ENCODE measurements at regions of chr11 and their contacts with region 1.

Region 1: DNA sequence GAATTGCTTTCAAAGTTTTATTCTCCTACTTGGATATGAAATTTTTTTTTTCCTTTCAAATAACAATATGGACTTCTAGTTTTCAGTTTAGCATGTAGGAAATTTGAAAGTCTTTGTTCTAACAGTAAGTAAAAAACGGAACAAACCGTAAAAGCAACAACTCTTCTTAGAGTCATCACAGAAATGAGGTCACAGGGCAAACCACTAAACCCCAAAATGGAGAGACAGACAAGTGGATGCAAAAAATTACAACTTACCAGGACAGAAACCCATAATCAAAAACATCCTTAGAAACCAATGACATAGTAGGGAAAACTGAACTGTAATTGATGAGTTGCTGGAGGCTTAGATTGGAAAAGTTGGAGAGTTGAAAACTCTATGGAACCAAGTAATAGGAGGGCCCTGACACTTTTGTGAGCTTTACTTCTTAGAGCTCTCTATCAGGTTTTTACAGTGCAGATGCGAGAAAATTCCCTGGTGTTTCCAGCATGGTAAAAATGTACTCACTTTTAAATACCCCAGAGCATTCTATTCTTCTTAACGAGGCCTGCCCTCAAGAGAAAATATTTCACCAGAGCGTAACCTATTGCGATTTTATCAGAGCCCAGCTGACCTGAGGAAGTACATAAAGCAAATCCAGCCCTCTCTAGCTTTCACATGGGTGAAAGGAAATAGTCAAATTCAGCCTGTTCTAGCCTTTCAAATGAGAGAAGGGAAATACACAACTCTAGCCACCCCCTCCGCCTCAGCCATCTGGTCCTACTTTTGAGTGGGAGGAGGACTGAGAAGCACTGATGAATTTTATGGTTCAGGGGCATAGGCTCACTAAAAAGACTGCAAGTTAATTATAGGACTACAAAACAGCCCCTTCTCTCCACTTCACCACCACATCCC is 39.1 kb downstream of the CASP12 start:
- DNase-seq: peak; percentile 66
- ATAC-seq: peak; percentile 88
- H3K4me3 ChIP-seq: peak overlapping the region in 3 of 5 experiments; percentile 15 to 46 (median 38)
- H3K4me3 Mint-ChIP-seq: peak overlapping the region; percentile 79
- H3K27ac ChIP-seq: peak overlapping the region; percentile 72 to 89
- H3K27ac Mint-ChIP-seq: peak overlapping the region; percentile 91
- H3K4me1 ChIP-seq: peaks cover 18 to 27% of the 10 kb centered on the region in 2 donors
- H3K4me1 Mint-ChIP-seq: peaks cover 34% of the 10 kb centered on the region
- H3K27me3 ChIP-seq: no peaks in the 10 kb centered on the region
- H3K27me3 Mint-ChIP-seq: no peaks in the 10 kb centered on the region
- CTCF ChIP-seq: no peak

Region 2: GRCh38 chr11:104876861-104877431 is 17.8 kb after region 1 on chr11:
- CTCF ChIA-PET with region 1: interaction called, 3 read pairs
- POLR2A ChIA-PET with region 1: no interaction called
- intact Hi-C with region 1: loop called (anchors 2 kb)
- DNase-seq: peak; percentile 66
- ATAC-seq: peak; percentile 77
- H3K4me3 ChIP-seq: peak overlapping the region; percentile 9 to 64 (median 24)
- H3K4me3 Mint-ChIP-seq: peak overlapping the region; percentile 68
- H3K27ac ChIP-seq: peak overlapping the region; percentile 78 to 82
- H3K27ac Mint-ChIP-seq: peak overlapping the region; percentile 82
- H3K4me1 ChIP-seq: peaks cover 34 to 36% of the 10 kb centered on the region in 2 donors
- H3K4me1 Mint-ChIP-seq: peaks cover 61% of the 10 kb centered on the region
- H3K27me3 ChIP-seq: no peaks in the 10 kb centered on the region
- H3K27me3 Mint-ChIP-seq: no peaks in the 10 kb centered on the region
- CTCF ChIP-seq: no peak